ENCODE measurements at regions of chr12 and their contacts with region 1.

Region 1: DNA sequence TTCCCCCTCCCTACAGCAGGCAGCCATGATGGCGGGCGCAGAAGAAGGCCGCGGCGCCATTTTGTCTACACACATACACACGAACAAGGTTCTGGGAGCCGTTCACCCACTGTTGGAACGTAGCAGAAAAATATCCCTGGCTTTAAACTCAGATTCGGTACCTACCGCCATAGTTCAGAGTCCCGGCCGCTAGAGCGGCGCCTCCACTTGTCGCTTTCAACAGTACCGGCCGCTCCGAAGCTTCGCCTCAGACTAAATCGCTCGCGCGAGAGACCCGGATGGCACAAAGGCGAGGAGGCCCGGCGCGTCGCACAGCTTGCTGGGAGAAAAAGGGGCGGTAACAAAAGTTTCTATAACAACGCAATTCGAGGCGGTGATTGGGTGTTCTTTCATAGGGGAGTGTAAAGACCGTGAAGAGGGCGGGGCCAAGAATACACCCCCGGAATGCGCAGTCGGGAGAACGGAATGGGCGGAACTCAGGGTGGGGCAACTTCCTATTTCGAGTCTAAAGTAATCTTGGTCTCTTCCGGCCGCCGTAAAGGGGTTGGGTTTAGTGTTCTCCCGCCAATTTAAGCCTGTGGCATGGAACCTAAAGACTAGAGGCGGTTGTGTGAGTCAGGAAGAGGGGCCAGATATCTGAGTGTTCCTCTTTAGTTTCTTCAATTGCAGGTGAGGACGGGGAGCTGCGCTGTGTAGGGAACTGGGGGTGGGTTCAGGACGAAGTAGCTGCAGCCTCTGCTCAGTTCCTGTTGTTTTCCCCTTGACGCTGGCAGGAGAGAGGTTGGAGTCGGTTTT is at the starts of genes KNTC1 and RSRC2:
- DNase-seq: peak; percentile 97 to 100
- H3K4me3 ChIP-seq: peak within 1 kb of the TSS; percentile 89 to 96
- H3K27ac ChIP-seq: peak within 1 kb of the TSS; percentile 99
- H3K4me1 ChIP-seq: peaks cover 14 to 27% of the 10 kb centered on the region in 2 donors
- H3K27me3 ChIP-seq: no peaks in the 10 kb centered on the region
- CTCF ChIP-seq: no peak
- total RNA-seq, gene KNTC1: 10.5 TPM
- total RNA-seq, gene RSRC2: 44.8 TPM

Region 2: GRCh38 chr12:122225683-122226407 is 301.0 kb before region 1 on chr12 and contains the start of gene DIABLO:
- intact Hi-C with region 1: loop called (anchors 1 kb)
- DNase-seq: peak; percentile 99 to 100
- H3K4me3 ChIP-seq: peak within 1 kb of the TSS; percentile 63 to 82
- H3K27ac ChIP-seq: peak within 1 kb of the TSS; percentile 91
- H3K4me1 ChIP-seq: peaks cover 10 to 17% of the 10 kb centered on the region in 2 donors
- H3K27me3 ChIP-seq: no peaks in the 10 kb centered on the region
- CTCF ChIP-seq: peak in 1 of 3 experiments; percentile 5
- total RNA-seq, gene DIABLO: 54.8 TPM

Region 3: DNA sequence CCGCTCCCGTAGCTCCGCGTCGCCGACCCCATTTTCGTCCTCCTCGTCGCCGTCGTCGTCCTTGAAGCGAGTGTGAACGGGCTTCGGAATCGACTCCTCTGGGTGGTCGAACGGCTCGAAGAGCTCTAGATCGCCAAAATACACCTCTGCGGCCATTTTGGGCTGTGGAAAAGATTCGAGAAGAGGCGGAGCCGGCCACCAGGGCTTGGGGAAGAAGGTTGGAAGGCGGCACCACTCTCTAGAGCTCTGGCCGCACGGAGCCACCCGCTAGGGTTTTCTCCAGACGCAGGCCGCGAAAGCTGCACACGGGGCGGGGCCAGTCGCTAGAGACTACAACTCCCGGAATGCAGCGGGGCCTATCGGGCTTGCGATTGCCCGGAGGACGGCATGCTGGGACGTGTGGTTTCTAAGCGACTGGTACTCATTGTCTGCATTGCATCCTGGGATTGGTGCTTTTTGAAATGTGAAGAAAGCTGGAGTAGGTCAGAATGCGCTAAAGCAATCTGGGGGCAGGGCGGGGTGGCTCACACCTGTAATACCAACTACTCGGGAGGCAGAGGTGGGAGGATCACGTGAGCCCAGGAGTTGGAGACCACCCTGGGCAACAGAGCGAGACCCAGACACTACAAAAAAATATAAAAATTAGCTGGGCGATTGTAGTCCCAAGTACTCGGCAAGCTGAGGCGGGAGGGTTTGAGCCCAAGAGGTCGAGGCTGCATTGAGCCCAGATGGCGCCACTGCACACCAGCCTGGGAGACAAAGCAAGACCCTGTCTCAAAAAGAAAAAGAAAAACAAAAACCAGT is 26.0 kb before region 1 on chr12 and contains the start of gene ZCCHC8:
- intact Hi-C with region 1: loop called (anchors 1 kb)
- DNase-seq: peak; percentile 92 to 97
- H3K4me3 ChIP-seq: peak within 1 kb of the TSS; percentile 78 to 88
- H3K27ac ChIP-seq: peak within 1 kb of the TSS; percentile 97 to 99
- H3K4me1 ChIP-seq: peaks cover 7 to 9% of the 10 kb centered on the region in 2 donors
- H3K27me3 ChIP-seq: no peaks in the 10 kb centered on the region
- CTCF ChIP-seq: no peak
- total RNA-seq, gene ZCCHC8: 6.4 TPM

Region 4: GRCh38 chr12:122584177-122584780 is 57.4 kb after region 1 on chr12:
- intact Hi-C with region 1: no loop called
- DNase-seq: no peak
- H3K4me3 ChIP-seq: no peak overlapping the region
- H3K27ac ChIP-seq: no peak overlapping the region
- H3K4me1 ChIP-seq: no peaks in the 10 kb centered on the region
- H3K27me3 ChIP-seq: no peaks in the 10 kb centered on the region
- CTCF ChIP-seq: no peak

Region 5: DNA sequence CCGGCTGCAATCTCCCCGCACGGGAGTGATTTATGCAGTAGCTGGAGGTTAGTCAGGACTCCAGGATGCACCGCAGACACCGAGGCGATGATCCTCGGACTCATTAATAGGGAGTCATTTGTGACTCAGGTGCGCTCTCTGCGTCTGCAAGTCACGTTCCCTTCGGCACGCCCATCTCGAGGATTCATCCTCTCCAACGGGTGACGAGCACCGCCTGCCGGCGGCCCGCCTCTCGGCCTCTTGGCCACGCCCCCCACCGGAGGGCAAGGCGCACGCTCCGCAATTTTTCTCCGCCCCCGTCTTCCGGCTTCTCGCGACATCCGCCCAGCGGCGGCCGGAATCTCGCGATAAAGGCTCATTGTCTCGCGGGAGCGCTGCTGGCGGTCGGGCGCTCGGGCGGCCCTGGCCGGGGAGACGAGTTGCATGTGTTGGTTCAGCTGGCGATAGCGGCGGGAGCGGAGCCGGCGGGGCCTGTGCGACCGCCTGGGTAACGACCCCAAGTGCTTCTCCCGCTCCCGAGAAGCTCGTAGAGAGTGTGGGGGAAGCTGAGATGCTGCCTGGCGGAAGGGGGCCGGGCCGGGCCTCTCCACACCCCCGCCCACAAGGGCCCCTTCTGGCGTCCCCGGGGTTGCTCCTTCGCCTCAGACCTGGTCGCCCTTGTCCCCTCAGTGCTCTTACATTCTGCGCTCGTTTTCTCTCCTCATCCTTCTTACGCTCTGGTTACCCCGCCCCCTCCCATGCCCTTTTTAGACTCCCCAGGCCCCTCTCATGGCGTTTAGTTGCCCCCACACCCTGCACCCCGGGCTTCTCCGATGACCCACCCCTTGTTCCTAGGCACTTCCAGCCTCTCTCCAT is 225.8 kb after region 1 on chr12 and contains the start of gene DENR:
- intact Hi-C with region 1: loop called (anchors 1 kb)
- DNase-seq: peak; percentile 90 to 99
- H3K4me3 ChIP-seq: peak within 1 kb of the TSS; percentile 77 to 80
- H3K27ac ChIP-seq: peak within 1 kb of the TSS; percentile 70 to 75
- H3K4me1 ChIP-seq: peaks cover 3 to 12% of the 10 kb centered on the region in 2 donors
- H3K27me3 ChIP-seq: no peaks in the 10 kb centered on the region
- CTCF ChIP-seq: peak; percentile 63 to 86 (median 72)
- total RNA-seq, gene DENR: 12.2 TPM

Measured in ascending aorta (tissue), 2 donors.